ENCODE measurements at regions of chr13 and their contacts with region 1.

Region 1: DNA sequence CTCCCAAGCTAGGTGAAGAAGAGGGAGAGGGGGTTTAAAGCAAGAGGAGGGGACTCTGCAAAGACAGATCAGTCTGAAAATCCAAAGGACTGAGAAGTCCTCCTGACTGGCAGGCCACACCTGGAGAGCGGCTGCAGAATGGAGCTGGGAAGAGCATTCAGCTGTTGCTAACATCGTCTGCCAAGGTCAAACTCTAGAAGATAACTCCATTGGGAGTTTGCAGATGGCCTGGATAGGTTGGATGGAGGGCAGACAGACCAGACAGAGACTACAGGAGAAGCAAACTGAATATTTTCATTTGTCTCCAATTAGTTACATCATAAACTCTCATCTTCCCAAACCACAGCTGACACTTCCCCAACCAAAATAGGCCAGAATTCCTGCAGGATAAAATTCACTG is 19.9 kb upstream of the SHISA2 start:
- DNase-seq: no peak
- ATAC-seq: no peak
- H3K4me3 ChIP-seq: no peak overlapping the region
- H3K4me3 Mint-ChIP-seq: no peak overlapping the region
- H3K27ac ChIP-seq: no peak overlapping the region
- H3K27ac Mint-ChIP-seq: no peak overlapping the region
- H3K4me1 ChIP-seq: no peaks in the 10 kb centered on the region
- H3K4me1 Mint-ChIP-seq: peaks cover 0 to 2% (median 2%) of the 10 kb centered on the region in 3 donors
- H3K27me3 ChIP-seq: peaks cover 0 to 19% of the 10 kb centered on the region in 2 experiments
- H3K27me3 Mint-ChIP-seq: peaks cover 26 to 33% of the 10 kb centered on the region in 2 donors

Region 2: GRCh38 chr13:25574437-25575411 is 497.0 kb before region 1 on chr13:
- CTCF ChIA-PET with region 1: interaction called, 5 to 12 read pairs
- POLR2A ChIA-PET with region 1: no interaction called
- DNase-seq: peak; percentile 20 to 84 (median 66)
- ATAC-seq: peak in 3 of 4 experiments; percentile 59 to 76 (median 74)
- H3K4me3 ChIP-seq: no peak overlapping the region
- H3K4me3 Mint-ChIP-seq: no peak overlapping the region
- H3K27ac ChIP-seq: no peak overlapping the region
- H3K27ac Mint-ChIP-seq: no peak overlapping the region
- H3K4me1 ChIP-seq: no peaks in the 10 kb centered on the region
- H3K4me1 Mint-ChIP-seq: no peaks in the 10 kb centered on the region
- H3K27me3 ChIP-seq: peaks cover 6 to 10% of the 10 kb centered on the region in 2 experiments
- H3K27me3 Mint-ChIP-seq: peaks cover 35 to 41% of the 10 kb centered on the region in 2 donors

Region 3: GRCh38 chr13:26007261-26008125 is 64.2 kb before region 1 on chr13:
- CTCF ChIA-PET with region 1: no interaction called
- POLR2A ChIA-PET with region 1: no interaction called
- DNase-seq: no peak
- ATAC-seq: no peak
- H3K4me3 ChIP-seq: no peak overlapping the region
- H3K4me3 Mint-ChIP-seq: no peak overlapping the region
- H3K27ac ChIP-seq: no peak overlapping the region
- H3K27ac Mint-ChIP-seq: peak overlapping the region in 1 of 2 donors; percentile 4
- H3K4me1 ChIP-seq: peaks cover 2 to 10% of the 10 kb centered on the region in 2 experiments
- H3K4me1 Mint-ChIP-seq: peaks cover 6 to 16% (median 10%) of the 10 kb centered on the region in 3 donors
- H3K27me3 ChIP-seq: no peaks in the 10 kb centered on the region
- H3K27me3 Mint-ChIP-seq: peaks cover 0 to 3% of the 10 kb centered on the region in 2 donors

Region 4: GRCh38 chr13:26132756-26133155 is 61.1 kb after region 1 on chr13:
- CTCF ChIA-PET with region 1: no interaction called
- POLR2A ChIA-PET with region 1: no interaction called
- DNase-seq: peak in 1 of 35 experiments; percentile 2
- ATAC-seq: no peak
- H3K4me3 ChIP-seq: no peak overlapping the region
- H3K4me3 Mint-ChIP-seq: no peak overlapping the region
- H3K27ac ChIP-seq: no peak overlapping the region
- H3K27ac Mint-ChIP-seq: no peak overlapping the region
- H3K4me1 ChIP-seq: no peaks in the 10 kb centered on the region
- H3K4me1 Mint-ChIP-seq: no peaks in the 10 kb centered on the region
- H3K27me3 ChIP-seq: no peaks in the 10 kb centered on the region
- H3K27me3 Mint-ChIP-seq: peaks cover 0 to 19% of the 10 kb centered on the region in 2 donors